ENCODE measurements at regions of chr1 and their contacts with region 1.

Region 1: GRCh38 chr1:62230709-62231108 is 36.1 kb downstream of the L1TD1 start:
- DNase-seq: peak; percentile 95 to 100
- H3K4me3 ChIP-seq: no peak overlapping the region
- H3K27ac ChIP-seq: peak overlapping the region; percentile 85
- H3K4me1 ChIP-seq: peaks cover 58% of the 10 kb centered on the region
- H3K27me3 ChIP-seq: no peaks in the 10 kb centered on the region
- CTCF ChIP-seq: no peak

Region 2: GRCh38 chr1:62218604-62219003 is 12.1 kb before region 1 on chr1:
- CTCF ChIA-PET with region 1: no interaction called
- POLR2A ChIA-PET with region 1: no interaction called
- intact Hi-C with region 1: no loop called
- DNase-seq: no peak
- H3K4me3 ChIP-seq: no peak overlapping the region
- H3K27ac ChIP-seq: no peak overlapping the region
- H3K4me1 ChIP-seq: no peaks in the 10 kb centered on the region
- H3K27me3 ChIP-seq: no peaks in the 10 kb centered on the region
- CTCF ChIP-seq: no peak

Region 3: GRCh38 chr1:62241377-62242131 is 10.8 kb after region 1 on chr1:
- CTCF ChIA-PET with region 1: no interaction called
- POLR2A ChIA-PET with region 1: no interaction called
- intact Hi-C with region 1: loop called (anchors 1 kb)
- DNase-seq: peak; percentile 56 to 57
- H3K4me3 ChIP-seq: no peak overlapping the region
- H3K27ac ChIP-seq: no peak overlapping the region
- H3K4me1 ChIP-seq: peaks cover 31% of the 10 kb centered on the region
- H3K27me3 ChIP-seq: no peaks in the 10 kb centered on the region
- CTCF ChIP-seq: no peak

Region 4: DNA sequence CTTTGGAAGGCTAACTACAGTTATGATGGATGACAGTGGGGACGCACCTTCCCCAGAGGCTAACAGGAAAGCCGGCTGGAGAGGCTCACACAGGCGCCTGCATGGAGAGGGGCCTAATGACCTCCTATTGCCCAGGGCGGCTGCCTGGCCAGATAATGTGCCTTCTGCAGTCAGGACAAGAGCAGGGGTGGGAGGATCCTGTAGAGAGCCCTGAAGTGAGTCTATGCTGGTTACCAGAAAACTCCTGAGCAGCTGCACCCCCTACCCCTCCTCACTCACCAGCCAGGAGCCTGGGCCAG is 77.4 kb after region 1 on chr1:
- CTCF ChIA-PET with region 1: no interaction called
- POLR2A ChIA-PET with region 1: interaction called, 5 read pairs
- intact Hi-C with region 1: loop called (anchors 1 kb)
- DNase-seq: peak; percentile 89 to 95
- H3K4me3 ChIP-seq: no peak overlapping the region
- H3K27ac ChIP-seq: peak overlapping the region; percentile 73
- H3K4me1 ChIP-seq: peaks cover 62% of the 10 kb centered on the region
- H3K27me3 ChIP-seq: no peaks in the 10 kb centered on the region
- CTCF ChIP-seq: no peak

Region 5: GRCh38 chr1:62391369-62391971 is 160.8 kb after region 1 on chr1:
- CTCF ChIA-PET with region 1: interaction called, 9 read pairs
- POLR2A ChIA-PET with region 1: no interaction called
- intact Hi-C with region 1: loop called (anchors 2 kb)
- DNase-seq: no peak
- H3K4me3 ChIP-seq: no peak overlapping the region
- H3K27ac ChIP-seq: no peak overlapping the region
- H3K4me1 ChIP-seq: peaks cover 27% of the 10 kb centered on the region
- H3K27me3 ChIP-seq: no peaks in the 10 kb centered on the region
- CTCF ChIP-seq: peak; percentile 66

Region 6: DNA sequence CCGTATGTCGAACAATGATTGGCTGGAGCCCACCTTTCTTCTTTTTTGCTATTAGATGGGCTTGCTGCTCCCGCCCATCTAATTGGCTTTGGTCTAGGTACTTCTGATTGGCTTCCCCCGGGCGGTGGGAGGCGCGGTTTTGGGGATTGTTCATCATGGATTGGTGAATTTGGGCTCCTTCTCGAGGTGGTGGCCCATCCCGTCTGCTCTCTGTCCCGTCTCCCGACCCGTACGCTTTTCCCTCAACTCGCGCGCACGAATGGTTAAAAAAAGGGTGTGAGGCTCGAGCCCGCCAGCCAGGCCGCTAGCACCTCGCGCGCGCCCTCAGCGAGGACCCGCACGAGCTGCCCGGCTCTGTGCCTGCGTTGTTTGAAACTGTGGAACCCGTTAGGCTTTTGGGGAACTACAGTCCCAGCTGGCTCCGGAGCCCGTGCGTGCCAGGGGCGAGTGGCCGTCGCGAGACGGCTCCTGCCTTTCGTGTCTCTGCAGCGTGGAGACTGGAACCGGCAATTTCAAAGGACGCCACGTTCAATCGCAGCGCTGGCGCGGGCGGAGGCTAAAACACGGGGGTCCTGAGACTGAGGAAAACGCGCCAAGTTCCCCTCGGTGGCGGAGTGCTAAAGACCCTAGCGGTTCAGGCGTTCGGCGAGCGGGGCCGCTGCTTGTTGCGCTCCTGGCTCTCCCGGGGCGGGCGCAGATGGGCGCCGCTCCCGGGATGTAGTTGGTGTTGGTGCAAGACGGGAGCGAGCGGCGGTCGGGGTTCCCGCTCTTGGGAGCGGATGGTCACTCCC is 206.0 kb after region 1 on chr1 and contains the start of gene USP1:
- CTCF ChIA-PET with region 1: no interaction called
- POLR2A ChIA-PET with region 1: no interaction called
- intact Hi-C with region 1: loop called (anchors 1 kb)
- DNase-seq: peak; percentile 99
- H3K4me3 ChIP-seq: peak within 1 kb of the TSS; percentile 100
- H3K27ac ChIP-seq: peak within 1 kb of the TSS; percentile 95
- H3K4me1 ChIP-seq: peaks cover 23% of the 10 kb centered on the region
- H3K27me3 ChIP-seq: no peaks in the 10 kb centered on the region
- CTCF ChIP-seq: no peak
- total RNA-seq, gene USP1: 42.1 and 50.3 TPM in 2 replicates